Heart right ventricle (tissue), 16 donors: ENCODE measurements at regions of chr9 and their contacts with region 1.

Region 1: GRCh38 chr9:7336356-7337065 is 463.1 kb downstream of the DMAC1 start:
- DNase-seq: peak in 1 of 2 donors; percentile 39
- ATAC-seq: peak in 6 of 8 donors; percentile 90 to 96 (median 94)
- H3K4me3 ChIP-seq: no peak overlapping the region
- H3K27ac ChIP-seq: peak overlapping the region in 4 of 10 donors; percentile 40 to 68 (median 52)
- H3K4me1 ChIP-seq: peaks cover 0 to 16% (median 0%) of the 10 kb centered on the region in 9 donors
- H3K27me3 ChIP-seq: no peaks in the 10 kb centered on the region
- CTCF ChIP-seq: no peak

Region 2: DNA sequence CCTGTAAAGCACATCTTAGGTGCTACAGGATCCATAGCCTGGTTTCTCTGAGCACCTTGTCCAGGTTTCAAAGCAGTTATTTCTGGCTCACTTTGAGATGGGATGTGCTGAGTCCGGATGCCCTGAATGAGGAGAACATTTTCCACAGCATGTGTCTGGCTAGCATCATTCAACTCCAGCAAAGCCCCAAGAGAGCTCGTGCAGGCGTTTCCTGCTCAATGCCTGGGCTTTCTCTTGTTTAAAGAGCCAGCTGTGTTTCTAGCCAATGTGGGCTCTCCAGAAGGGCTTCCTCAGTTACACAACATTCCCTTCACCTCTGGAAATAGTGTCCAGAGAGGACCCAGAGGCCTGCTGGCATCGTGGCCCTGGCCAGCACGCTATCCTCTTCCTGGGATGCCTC is 51.3 kb after region 1 on chr9:
- intact Hi-C with region 1: loop called in 1 of 10 experiments (anchors 5 kb)
- DNase-seq: peak; percentile 11 to 16
- ATAC-seq: peak in 5 of 8 donors; percentile 47 to 77 (median 63)
- H3K4me3 ChIP-seq: no peak overlapping the region
- H3K27ac ChIP-seq: no peak overlapping the region
- H3K4me1 ChIP-seq: peaks cover 0 to 7% (median 0%) of the 10 kb centered on the region in 9 donors
- H3K27me3 ChIP-seq: peaks cover 0 to under 1% (median 0%) of the 10 kb centered on the region in 7 donors
- CTCF ChIP-seq: no peak